ENCODE measurements at regions of chr22 and their contacts with region 1.

Region 1: DNA sequence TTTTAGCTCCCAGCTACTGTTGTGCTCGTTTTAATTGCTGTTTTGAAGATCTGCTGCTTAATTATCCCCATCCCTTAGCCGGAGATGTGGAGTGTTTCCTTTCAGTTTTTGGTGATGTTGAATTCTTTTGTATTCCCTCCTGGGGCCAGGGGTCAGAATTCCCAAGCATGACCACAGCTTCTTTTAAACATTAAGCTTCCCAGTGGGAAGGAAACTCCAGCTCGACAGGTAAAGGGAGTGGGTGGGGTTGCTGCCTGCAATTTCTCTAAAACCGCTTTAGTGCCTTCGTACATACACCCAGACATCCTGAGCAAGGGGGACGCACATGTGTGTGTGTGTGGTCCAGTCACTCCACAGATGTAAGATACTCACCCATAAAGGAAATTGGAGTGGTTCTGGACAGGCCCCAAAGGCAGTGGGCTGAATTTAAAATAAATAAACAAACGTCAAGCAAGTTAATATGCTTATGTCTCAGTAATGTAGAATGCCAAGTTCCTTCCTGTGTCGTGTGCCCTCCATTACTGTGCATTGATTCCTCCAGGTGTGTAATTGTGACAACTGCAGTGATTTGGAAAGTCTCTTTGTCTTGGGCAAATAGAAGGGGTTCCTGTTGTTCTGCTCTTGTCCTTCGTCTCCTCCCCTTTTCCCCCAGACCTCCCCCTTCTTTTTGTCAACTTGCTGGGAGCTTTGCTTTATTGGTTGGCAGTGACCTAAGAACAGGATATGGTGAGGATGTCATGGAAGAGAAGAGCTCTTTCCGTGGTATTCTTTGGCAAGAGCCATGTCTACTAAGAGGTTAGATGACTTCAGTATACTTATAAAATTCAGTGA is 19.2 kb upstream of the ADSL start:
- DNase-seq: peak; percentile 16

Region 2: GRCh38 chr22:40094485-40094884 is 232.6 kb before region 1 on chr22:
- in situ Hi-C with region 1: no loop called
- DNase-seq: no peak

Region 3: DNA sequence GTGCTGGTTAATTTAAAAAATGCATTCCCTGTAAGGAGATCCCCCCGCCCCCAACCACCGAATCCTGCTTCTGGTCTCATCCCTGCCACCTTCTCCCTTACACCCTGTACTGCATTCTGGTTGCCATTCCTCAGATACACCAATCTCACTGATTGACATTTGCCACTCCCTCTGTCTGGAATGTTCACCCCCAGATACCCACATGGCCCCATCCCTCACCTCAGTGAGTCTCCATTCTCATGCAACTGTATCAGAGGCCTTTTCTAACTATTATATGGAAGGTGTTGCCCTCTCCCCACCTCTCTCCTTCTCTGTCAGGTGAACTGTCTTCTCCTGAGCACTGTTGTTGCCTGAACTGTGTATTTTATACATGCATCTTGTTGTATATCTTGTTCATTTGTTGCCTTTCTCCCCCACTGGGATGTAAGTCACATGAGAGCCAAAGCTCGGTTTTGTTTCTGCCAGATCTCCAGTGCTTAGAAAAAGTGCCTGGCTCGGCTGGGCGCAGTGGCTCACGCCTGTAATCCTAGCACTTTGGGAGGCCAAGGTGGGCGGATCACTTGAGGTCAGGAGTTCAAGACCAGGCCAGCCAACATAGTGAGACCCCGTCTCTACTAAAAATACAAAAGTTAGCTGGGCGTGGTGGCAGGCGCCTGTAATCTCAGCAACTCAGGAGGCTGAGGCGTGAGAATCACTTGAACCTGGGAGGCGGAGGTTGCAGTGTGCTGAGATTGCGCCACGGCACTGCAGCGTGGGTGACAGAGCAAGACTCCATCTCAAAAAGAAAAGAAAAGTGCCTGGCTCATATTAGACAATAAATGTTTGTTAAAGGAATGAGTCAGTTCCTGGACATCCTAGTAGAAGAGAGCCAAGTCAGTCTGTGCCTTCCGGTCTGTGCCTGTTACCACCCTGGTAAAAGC is 88.4 kb before region 1 on chr22:
- in situ Hi-C with region 1: loop called (anchors 10 kb)
- DNase-seq: peak; percentile 73

Region 4: GRCh38 chr22:40250608-40251007 is 76.5 kb before region 1 on chr22:
- in situ Hi-C with region 1: no loop called
- DNase-seq: no peak